B cell (primary cell): ENCODE measurements at regions of chr11 and their contacts with region 1.

Region 1: GRCh38 chr11:18115360-18116127 is 9.7 kb upstream of the SAAL1 start:
- DNase-seq: peak; percentile 81
- ATAC-seq: peak; percentile 91
- H3K4me3 ChIP-seq: no peak overlapping the region
- H3K4me3 Mint-ChIP-seq: no peak overlapping the region
- H3K27ac ChIP-seq: no peak overlapping the region
- H3K27ac Mint-ChIP-seq: no peak overlapping the region
- H3K4me1 ChIP-seq: peaks cover 0 to 5% of the 10 kb centered on the region in 2 donors
- H3K4me1 Mint-ChIP-seq: peaks cover 2% of the 10 kb centered on the region
- H3K27me3 ChIP-seq: peaks cover 0 to 6% (median 1%) of the 10 kb centered on the region in 4 experiments
- H3K27me3 Mint-ChIP-seq: peaks cover 33% of the 10 kb centered on the region
- CTCF ChIP-seq: peak; percentile 90

Region 2: GRCh38 chr11:18056561-18057181 is 58.9 kb before region 1 on chr11:
- CTCF ChIA-PET with region 1: no interaction called
- POLR2A ChIA-PET with region 1: no interaction called
- intact Hi-C with region 1: no loop called
- DNase-seq: no peak
- ATAC-seq: no peak
- H3K4me3 ChIP-seq: no peak overlapping the region
- H3K4me3 Mint-ChIP-seq: no peak overlapping the region
- H3K27ac ChIP-seq: no peak overlapping the region
- H3K27ac Mint-ChIP-seq: no peak overlapping the region
- H3K4me1 ChIP-seq: no peaks in the 10 kb centered on the region
- H3K4me1 Mint-ChIP-seq: no peaks in the 10 kb centered on the region
- H3K27me3 ChIP-seq: no peaks in the 10 kb centered on the region
- H3K27me3 Mint-ChIP-seq: no peaks in the 10 kb centered on the region
- CTCF ChIP-seq: no peak

Region 3: DNA sequence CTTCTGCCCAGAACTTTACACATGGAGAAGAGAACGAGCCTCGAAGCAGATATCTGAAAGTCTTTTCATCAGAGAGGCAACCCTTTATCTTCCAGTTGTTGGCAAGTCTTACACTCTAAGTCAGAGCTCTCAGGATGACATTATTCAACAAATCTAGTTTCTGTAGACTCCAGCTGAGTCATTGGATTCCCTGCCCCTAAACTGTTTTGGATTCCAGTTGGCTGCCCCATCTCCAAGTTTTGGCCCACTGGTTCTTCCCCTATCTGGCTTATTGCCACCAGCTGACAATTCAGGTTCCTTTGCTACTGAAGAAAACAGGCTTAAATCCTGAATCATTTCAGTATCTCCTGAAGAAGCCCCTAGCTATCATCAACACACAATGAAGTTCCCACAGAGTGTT is 23.8 kb before region 1 on chr11:
- CTCF ChIA-PET with region 1: interaction called, 14 read pairs
- POLR2A ChIA-PET with region 1: no interaction called
- intact Hi-C with region 1: no loop called
- DNase-seq: no peak
- ATAC-seq: no peak
- H3K4me3 ChIP-seq: no peak overlapping the region
- H3K4me3 Mint-ChIP-seq: no peak overlapping the region
- H3K27ac ChIP-seq: no peak overlapping the region
- H3K27ac Mint-ChIP-seq: no peak overlapping the region
- H3K4me1 ChIP-seq: no peaks in the 10 kb centered on the region
- H3K4me1 Mint-ChIP-seq: no peaks in the 10 kb centered on the region
- H3K27me3 ChIP-seq: no peaks in the 10 kb centered on the region
- H3K27me3 Mint-ChIP-seq: no peaks in the 10 kb centered on the region
- CTCF ChIP-seq: no peak

Region 4: DNA sequence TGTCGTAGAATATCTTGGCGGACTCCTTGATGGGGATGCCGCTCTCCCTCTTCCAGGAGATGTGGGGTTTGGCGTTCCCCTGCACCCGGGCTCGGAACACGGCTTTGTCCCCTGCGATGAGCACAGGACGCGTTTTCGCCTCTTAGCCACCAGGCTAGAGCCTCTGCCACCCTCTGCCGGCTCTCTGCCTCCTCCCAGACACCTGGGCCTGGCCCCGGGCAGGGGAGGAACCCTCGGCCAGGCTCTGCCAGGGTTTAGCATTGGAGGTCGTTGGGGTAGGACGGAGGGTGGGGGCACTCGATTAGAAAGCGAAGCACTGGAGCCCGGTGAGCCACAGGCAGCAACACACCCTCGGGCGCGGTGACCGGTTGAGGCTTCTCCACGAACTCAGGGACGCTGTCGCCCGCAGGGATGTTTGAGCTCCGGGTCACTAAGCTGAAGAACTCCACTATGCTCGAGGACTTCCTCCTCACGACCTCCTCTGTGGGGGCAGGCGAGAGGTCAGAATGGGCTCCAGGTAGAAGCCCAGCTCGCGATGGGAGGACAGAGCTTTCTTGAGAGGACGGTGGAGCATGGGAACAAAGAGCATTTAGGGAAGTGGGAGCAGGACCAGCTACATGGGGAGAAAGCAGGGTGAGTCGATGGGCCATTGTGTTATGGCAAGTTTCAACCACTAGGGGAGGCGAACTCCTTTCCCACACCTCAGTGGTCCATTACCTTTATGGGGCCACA is 606.2 kb after region 1 on chr11:
- CTCF ChIA-PET with region 1: interaction called, 10 read pairs
- POLR2A ChIA-PET with region 1: no interaction called
- intact Hi-C with region 1: no loop called
- DNase-seq: peak; percentile 77
- ATAC-seq: peak; percentile 66
- H3K4me3 ChIP-seq: peak overlapping the region; percentile 24 to 80 (median 69)
- H3K4me3 Mint-ChIP-seq: peak overlapping the region; percentile 92
- H3K27ac ChIP-seq: peak overlapping the region in 1 of 2 donors; percentile 11
- H3K27ac Mint-ChIP-seq: peak overlapping the region; percentile 42
- H3K4me1 ChIP-seq: peaks cover 9 to 17% of the 10 kb centered on the region in 2 donors
- H3K4me1 Mint-ChIP-seq: peaks cover 9% of the 10 kb centered on the region
- H3K27me3 ChIP-seq: no peaks in the 10 kb centered on the region
- H3K27me3 Mint-ChIP-seq: peaks cover 6% of the 10 kb centered on the region
- CTCF ChIP-seq: peak; percentile 88

Region 5: GRCh38 chr11:18768472-18768901 is 652.9 kb after region 1 on chr11:
- CTCF ChIA-PET with region 1: interaction called, 21 read pairs
- POLR2A ChIA-PET with region 1: no interaction called
- intact Hi-C with region 1: loop called (anchors 1 kb)
- DNase-seq: no peak
- ATAC-seq: no peak
- H3K4me3 ChIP-seq: no peak overlapping the region
- H3K4me3 Mint-ChIP-seq: no peak overlapping the region
- H3K27ac ChIP-seq: no peak overlapping the region
- H3K27ac Mint-ChIP-seq: no peak overlapping the region
- H3K4me1 ChIP-seq: no peaks in the 10 kb centered on the region
- H3K4me1 Mint-ChIP-seq: peaks cover 5% of the 10 kb centered on the region
- H3K27me3 ChIP-seq: peaks cover 0 to 5% (median 0%) of the 10 kb centered on the region in 4 experiments
- H3K27me3 Mint-ChIP-seq: peaks cover 29% of the 10 kb centered on the region
- CTCF ChIP-seq: no peak